ENCODE measurements at regions of chr9 and their contacts with region 1.

Region 1: GRCh38 chr9:128127990-128128835 is 684 bp upstream of the PTGES2 start:
- DNase-seq: peak; percentile 90
- ATAC-seq: peak; percentile 78
- H3K4me3 ChIP-seq: peak overlapping the region; percentile 90 to 92
- H3K27ac ChIP-seq: peak overlapping the region; percentile 99
- H3K4me1 ChIP-seq: peaks cover 9 to 31% of the 10 kb centered on the region in 2 experiments
- H3K27me3 ChIP-seq: no peaks in the 10 kb centered on the region
- CTCF ChIP-seq: no peak
- POLR2A ChIP-seq: no peak
- RAD21 ChIP-seq: no peak

Region 2: DNA sequence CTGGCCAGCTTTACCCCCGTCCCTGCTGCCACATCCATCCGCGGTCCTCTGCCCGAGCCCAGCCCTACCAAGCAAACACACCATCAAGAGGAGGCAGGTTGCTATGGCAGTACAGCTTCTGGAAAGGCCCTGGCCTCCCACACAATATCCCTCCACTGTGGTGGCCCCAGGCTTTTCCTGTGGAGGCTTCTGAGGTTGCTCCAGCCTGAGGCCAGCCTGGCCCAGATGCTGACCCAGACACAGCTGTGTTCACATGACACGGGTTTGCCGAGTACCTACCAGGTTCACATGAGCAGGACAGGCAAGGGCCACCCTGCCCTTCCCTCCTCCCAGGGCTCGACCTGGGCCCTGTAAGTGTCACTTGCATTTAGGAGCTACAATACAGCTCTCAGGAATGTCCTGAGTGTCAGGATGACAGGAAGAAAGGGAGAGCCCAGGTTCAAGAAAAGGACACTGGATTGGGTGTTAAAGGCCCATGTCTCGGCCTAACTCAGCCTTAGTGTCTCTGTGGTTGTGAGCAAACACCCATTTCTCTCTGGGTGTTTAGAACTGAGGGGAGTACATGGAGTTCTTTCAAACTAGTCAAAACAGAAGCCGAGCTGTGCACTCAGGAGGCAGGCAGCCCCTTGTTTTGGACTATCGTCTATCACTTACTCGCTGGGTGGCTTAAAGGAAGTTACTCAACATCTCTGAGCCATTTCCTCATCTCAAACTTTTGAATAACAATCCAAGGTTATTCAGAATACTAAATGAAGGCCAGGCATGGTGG is 101.3 kb before region 1 on chr9:
- CTCF ChIA-PET with region 1: no interaction called
- POLR2A ChIA-PET with region 1: no interaction called
- RAD21 ChIA-PET with region 1: no interaction called
- intact Hi-C with region 1: no loop called
- DNase-seq: no peak
- ATAC-seq: peak; percentile 31; the same call in 1 of the 2 replicates
- H3K4me3 ChIP-seq: no peak overlapping the region
- H3K27ac ChIP-seq: no peak overlapping the region
- H3K4me1 ChIP-seq: peaks cover 0 to 24% of the 10 kb centered on the region in 2 experiments; a peak in 2 of 4 replicates
- H3K27me3 ChIP-seq: no peaks in the 10 kb centered on the region
- CTCF ChIP-seq: no peak
- POLR2A ChIP-seq: no peak
- RAD21 ChIP-seq: no peak

Region 3: DNA sequence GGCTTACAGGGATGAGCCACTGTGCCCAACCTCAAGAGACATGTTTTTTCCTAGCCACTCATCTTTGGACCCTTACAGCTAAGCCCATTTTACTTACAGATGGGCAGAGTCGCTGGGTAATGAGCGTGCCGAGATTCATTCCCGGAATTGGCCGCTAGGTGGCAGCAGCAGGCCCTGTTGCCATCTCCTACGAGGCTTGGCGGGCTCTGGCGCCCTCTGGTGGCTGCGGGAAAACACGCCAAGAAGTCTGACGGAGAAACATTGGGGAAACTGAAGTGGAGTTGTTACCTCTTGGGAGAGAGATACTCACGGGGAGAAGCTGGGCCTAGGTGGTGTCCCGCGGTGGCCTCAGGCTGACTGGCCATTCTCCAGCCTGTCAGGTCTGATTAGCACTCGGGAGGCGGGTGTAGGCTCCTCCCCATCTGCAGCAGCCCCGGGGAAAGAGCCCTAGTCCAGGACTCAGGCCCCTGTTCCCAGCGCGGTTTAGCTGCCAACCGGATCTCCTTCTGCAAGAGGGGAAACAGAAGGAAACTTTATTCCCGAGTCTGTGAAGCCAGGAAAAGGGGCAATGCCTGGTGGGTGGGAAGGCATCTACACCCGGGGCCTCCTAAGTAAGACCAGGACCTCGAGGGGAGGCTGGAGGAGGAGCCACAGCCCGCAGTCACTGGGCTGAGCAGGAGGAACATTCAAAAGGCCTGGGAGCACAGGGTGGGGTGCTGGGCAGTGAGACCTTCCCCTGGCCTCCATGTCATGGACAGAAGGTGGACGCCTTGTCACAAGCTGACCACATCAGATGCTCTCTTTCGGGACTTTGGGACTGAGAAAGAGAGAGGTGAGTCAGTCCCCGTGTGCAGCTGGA is 10.4 kb before region 1 on chr9:
- CTCF ChIA-PET with region 1: interaction called, 14 read pairs
- POLR2A ChIA-PET with region 1: no interaction called
- RAD21 ChIA-PET with region 1: no interaction called
- intact Hi-C with region 1: no loop called
- DNase-seq: peak; percentile 74
- ATAC-seq: peak; percentile 85
- H3K4me3 ChIP-seq: no peak overlapping the region
- H3K27ac ChIP-seq: no peak overlapping the region
- H3K4me1 ChIP-seq: peaks cover 3 to 4% of the 10 kb centered on the region in 2 experiments; a peak in 3 of 4 replicates
- H3K27me3 ChIP-seq: no peaks in the 10 kb centered on the region
- CTCF ChIP-seq: peak in 2 of 3 experiments; percentile 100; a peak in 4 of 6 replicates
- POLR2A ChIP-seq: no peak
- RAD21 ChIP-seq: no peak

Region 4: GRCh38 chr9:128159784-128160602 is 31.8 kb after region 1 on chr9 and contains the start of gene BBLN:
- CTCF ChIA-PET with region 1: interaction called, 19 read pairs
- POLR2A ChIA-PET with region 1: interaction called, 5 read pairs
- RAD21 ChIA-PET with region 1: no interaction called
- intact Hi-C with region 1: no loop called
- DNase-seq: peak; percentile 88
- ATAC-seq: peak; percentile 91
- H3K4me3 ChIP-seq: peak within 1 kb of the TSS; percentile 91 to 99
- H3K27ac ChIP-seq: peak within 1 kb of the TSS; percentile 97
- H3K4me1 ChIP-seq: peaks cover 0 to 17% of the 10 kb centered on the region in 2 experiments; a peak in 2 of 4 replicates
- H3K27me3 ChIP-seq: no peaks in the 10 kb centered on the region
- CTCF ChIP-seq: no peak
- POLR2A ChIP-seq: peak; percentile 89
- RAD21 ChIP-seq: no peak
- total RNA-seq, gene BBLN: 119 TPM

Region 5: DNA sequence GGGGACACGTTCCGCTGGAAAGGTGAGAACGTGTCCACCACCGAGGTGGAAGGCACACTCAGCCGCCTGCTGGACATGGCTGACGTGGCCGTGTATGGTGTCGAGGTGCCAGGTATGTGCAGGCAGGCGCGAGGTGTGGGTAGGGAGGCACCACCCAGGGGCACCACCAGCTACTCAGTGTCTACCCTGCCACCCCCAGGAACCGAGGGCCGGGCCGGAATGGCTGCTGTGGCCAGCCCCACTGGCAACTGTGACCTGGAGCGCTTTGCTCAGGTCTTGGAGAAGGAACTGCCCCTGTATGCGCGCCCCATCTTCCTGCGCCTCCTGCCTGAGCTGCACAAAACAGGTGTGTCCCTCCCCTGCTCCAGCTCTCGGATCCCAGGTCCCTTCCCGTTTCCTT is 227.2 kb after region 1 on chr9:
- CTCF ChIA-PET with region 1: no interaction called
- POLR2A ChIA-PET with region 1: no interaction called
- RAD21 ChIA-PET with region 1: no interaction called
- intact Hi-C with region 1: no loop called
- DNase-seq: no peak
- ATAC-seq: no peak
- H3K4me3 ChIP-seq: no peak overlapping the region
- H3K27ac ChIP-seq: no peak overlapping the region
- H3K4me1 ChIP-seq: peaks cover 0 to 10% of the 10 kb centered on the region in 2 experiments; a peak in 1 of 4 replicates
- H3K27me3 ChIP-seq: no peaks in the 10 kb centered on the region
- CTCF ChIP-seq: no peak
- POLR2A ChIP-seq: no peak
- RAD21 ChIP-seq: no peak